ENCODE measurements at regions of chr17 and their contacts with region 1.

Region 1: GRCh38 chr17:28896884-28897768 is at the start of gene FLOT2:
- DNase-seq: no peak
- H3K4me3 ChIP-seq: peak within 1 kb of the TSS; percentile 83 to 90
- H3K27ac ChIP-seq: peak within 1 kb of the TSS; percentile 93
- H3K4me1 ChIP-seq: peaks cover 67% of the 10 kb centered on the region
- H3K27me3 ChIP-seq: no peaks in the 10 kb centered on the region
- CTCF ChIP-seq: no peak
- POLR2A ChIP-seq: peak in 1 of 2 donors; percentile 55
- total RNA-seq, gene FLOT2: 56.2 TPM

Region 2: GRCh38 chr17:28484296-28484695 is 412.8 kb before region 1 on chr17:
- intact Hi-C with region 1: no loop called
- DNase-seq: no peak
- H3K4me3 ChIP-seq: no peak overlapping the region
- H3K27ac ChIP-seq: no peak overlapping the region
- H3K4me1 ChIP-seq: no peaks in the 10 kb centered on the region
- H3K27me3 ChIP-seq: no peaks in the 10 kb centered on the region
- CTCF ChIP-seq: no peak
- POLR2A ChIP-seq: no peak

Region 3: DNA sequence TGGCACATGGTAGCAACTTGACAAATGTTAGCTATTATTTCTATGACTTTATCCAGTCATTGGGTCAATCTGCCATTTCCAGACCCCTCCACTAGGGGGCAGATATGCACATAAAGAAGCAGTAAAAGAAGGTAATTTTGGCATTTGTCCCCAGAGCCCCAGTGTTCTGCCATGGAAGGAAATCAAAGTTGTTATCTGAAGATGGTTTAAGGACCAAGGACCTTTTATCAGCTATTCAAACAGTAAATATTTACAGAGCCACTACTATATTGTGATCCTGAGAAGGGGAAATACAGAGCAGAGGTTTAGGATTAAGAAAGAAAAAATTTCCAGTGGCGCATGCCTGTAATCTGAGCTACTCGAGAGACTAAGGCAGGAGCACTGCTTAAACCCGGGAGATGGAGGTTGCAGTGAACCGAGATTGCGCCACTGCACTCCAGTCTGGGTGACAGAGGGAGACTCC is 133.3 kb before region 1 on chr17:
- intact Hi-C with region 1: loop called (anchors 5 kb)
- DNase-seq: no peak
- H3K4me3 ChIP-seq: no peak overlapping the region
- H3K27ac ChIP-seq: no peak overlapping the region
- H3K4me1 ChIP-seq: no peaks in the 10 kb centered on the region
- H3K27me3 ChIP-seq: no peaks in the 10 kb centered on the region
- CTCF ChIP-seq: peak; percentile 79 to 89 (median 87)
- POLR2A ChIP-seq: no peak

Measured in vagina (tissue), 2 donors.